B cell (primary cell): ENCODE measurements at regions of chr3 and their contacts with region 1.

Region 1: DNA sequence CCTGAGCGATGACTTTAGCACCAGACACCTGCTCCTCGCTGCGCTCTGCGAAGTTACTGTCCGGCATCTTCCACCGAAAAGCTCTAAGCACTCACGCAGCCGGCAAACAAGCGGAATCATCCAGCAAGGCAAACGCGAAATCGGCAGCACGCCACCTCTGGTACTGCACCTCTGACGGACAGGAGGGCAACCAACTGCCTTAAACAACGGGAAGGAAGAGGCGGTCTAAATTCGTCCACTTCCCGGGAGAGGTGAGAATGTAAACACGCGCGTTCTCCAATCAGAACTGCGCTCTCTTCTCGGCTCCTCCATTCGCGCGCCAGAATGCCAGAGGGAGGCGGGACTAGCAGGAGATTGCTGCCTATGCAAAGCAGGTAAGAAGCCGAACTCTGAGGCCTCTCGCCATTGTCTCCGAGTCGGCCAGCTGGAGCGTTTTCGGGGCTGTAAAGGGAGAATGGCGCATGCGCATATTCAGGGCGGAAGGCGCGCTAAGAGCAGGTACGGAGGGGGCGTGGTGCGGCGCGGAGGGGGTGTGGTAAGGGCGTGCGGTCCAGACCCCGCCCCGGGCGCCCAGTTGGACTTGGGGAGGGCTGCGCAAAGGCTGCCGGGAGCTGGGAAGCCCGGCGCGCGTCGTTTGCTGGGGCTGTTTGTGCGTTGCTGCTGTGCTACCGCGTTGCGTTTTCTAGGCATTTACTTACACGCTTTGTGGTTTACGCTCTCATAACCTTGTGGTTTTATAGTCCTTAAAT is at the starts of genes BTD and HACL1:
- DNase-seq: peak; percentile 99
- ATAC-seq: peak; percentile 88
- H3K4me3 ChIP-seq: peak within 1 kb of the TSS; percentile 67 to 99 (median 92)
- H3K4me3 Mint-ChIP-seq: peak within 1 kb of the TSS; percentile 100
- H3K27ac ChIP-seq: peak within 1 kb of the TSS; percentile 81 to 87
- H3K27ac Mint-ChIP-seq: peak within 1 kb of the TSS; percentile 99
- H3K4me1 ChIP-seq: peaks cover 16 to 23% of the 10 kb centered on the region in 2 donors
- H3K4me1 Mint-ChIP-seq: peaks cover 41% of the 10 kb centered on the region
- H3K27me3 ChIP-seq: no peaks in the 10 kb centered on the region
- H3K27me3 Mint-ChIP-seq: no peaks in the 10 kb centered on the region
- CTCF ChIP-seq: peak; percentile 31
- total RNA-seq, gene BTD: 21.9 and 25.3 TPM in 2 replicates
- total RNA-seq, gene HACL1: 38.7 and 38.9 TPM in 2 replicates

Region 2: GRCh38 chr3:15325242-15325641 is 276.3 kb before region 1 on chr3:
- CTCF ChIA-PET with region 1: no interaction called
- POLR2A ChIA-PET with region 1: no interaction called
- intact Hi-C with region 1: no loop called
- DNase-seq: no peak
- ATAC-seq: no peak
- H3K4me3 ChIP-seq: no peak overlapping the region
- H3K4me3 Mint-ChIP-seq: peak overlapping the region; percentile 15
- H3K27ac ChIP-seq: no peak overlapping the region
- H3K27ac Mint-ChIP-seq: peak overlapping the region; percentile 12
- H3K4me1 ChIP-seq: peaks cover 74 to 89% of the 10 kb centered on the region in 2 donors
- H3K4me1 Mint-ChIP-seq: peaks cover 85% of the 10 kb centered on the region
- H3K27me3 ChIP-seq: no peaks in the 10 kb centered on the region
- H3K27me3 Mint-ChIP-seq: no peaks in the 10 kb centered on the region
- CTCF ChIP-seq: no peak

Region 3: GRCh38 chr3:15427182-15427880 is 174.2 kb before region 1 on chr3 and contains the starts of genes EAF1 and METTL6:
- CTCF ChIA-PET with region 1: no interaction called
- POLR2A ChIA-PET with region 1: no interaction called
- intact Hi-C with region 1: loop called (anchors 1 kb)
- DNase-seq: peak; percentile 88
- ATAC-seq: peak; percentile 89
- H3K4me3 ChIP-seq: peak within 1 kb of the TSS; percentile 88 to 99 (median 94)
- H3K4me3 Mint-ChIP-seq: peak within 1 kb of the TSS; percentile 95
- H3K27ac ChIP-seq: peak within 1 kb of the TSS; percentile 75 to 85
- H3K27ac Mint-ChIP-seq: peak within 1 kb of the TSS; percentile 92
- H3K4me1 ChIP-seq: peaks cover 19 to 28% of the 10 kb centered on the region in 2 donors
- H3K4me1 Mint-ChIP-seq: peaks cover 45% of the 10 kb centered on the region
- H3K27me3 ChIP-seq: no peaks in the 10 kb centered on the region
- H3K27me3 Mint-ChIP-seq: no peaks in the 10 kb centered on the region
- CTCF ChIP-seq: peak; percentile 56
- total RNA-seq, gene EAF1: 19.8 TPM in 2 replicates
- total RNA-seq, gene METTL6: 23.9 and 27.1 TPM in 2 replicates

Region 4: DNA sequence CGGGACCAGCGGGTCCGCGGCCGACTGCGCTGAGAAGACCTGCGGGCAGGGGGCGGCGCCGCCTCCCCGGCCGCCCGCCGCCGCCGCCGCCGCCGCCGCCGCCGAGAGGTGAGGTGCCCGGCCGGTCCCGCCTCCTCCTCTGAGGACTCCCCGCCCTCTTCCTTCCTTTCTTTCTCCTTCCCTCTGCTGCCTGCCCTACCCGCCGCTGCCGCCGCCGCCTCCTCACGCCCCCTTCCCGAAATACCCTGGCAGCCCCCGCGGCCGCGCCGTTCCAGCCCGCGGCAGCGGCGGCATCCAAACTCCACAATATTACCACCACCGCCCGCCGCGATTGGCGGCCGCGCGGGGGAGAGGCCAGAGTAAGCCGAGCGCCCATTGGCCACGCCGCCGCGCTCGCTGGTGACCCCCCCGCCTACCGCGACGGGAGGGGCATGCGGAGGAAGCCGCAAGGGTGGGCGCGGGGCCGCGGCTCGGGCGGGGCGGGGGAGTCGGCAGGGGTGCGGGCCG is 258.0 kb after region 1 on chr3:
- CTCF ChIA-PET with region 1: no interaction called
- POLR2A ChIA-PET with region 1: no interaction called
- intact Hi-C with region 1: loop called (anchors 1 kb)
- DNase-seq: peak; percentile 86
- ATAC-seq: peak; percentile 76
- H3K4me3 ChIP-seq: peak overlapping the region in 4 of 5 experiments; percentile 66 to 87 (median 81)
- H3K4me3 Mint-ChIP-seq: peak overlapping the region; percentile 86
- H3K27ac ChIP-seq: peak overlapping the region; percentile 73 to 87
- H3K27ac Mint-ChIP-seq: peak overlapping the region; percentile 97
- H3K4me1 ChIP-seq: peaks cover 10 to 16% of the 10 kb centered on the region in 2 donors
- H3K4me1 Mint-ChIP-seq: peaks cover 24% of the 10 kb centered on the region
- H3K27me3 ChIP-seq: no peaks in the 10 kb centered on the region
- H3K27me3 Mint-ChIP-seq: no peaks in the 10 kb centered on the region
- CTCF ChIP-seq: no peak